ENCODE measurements at regions of chr14 and their contacts with region 1.

Region 1: DNA sequence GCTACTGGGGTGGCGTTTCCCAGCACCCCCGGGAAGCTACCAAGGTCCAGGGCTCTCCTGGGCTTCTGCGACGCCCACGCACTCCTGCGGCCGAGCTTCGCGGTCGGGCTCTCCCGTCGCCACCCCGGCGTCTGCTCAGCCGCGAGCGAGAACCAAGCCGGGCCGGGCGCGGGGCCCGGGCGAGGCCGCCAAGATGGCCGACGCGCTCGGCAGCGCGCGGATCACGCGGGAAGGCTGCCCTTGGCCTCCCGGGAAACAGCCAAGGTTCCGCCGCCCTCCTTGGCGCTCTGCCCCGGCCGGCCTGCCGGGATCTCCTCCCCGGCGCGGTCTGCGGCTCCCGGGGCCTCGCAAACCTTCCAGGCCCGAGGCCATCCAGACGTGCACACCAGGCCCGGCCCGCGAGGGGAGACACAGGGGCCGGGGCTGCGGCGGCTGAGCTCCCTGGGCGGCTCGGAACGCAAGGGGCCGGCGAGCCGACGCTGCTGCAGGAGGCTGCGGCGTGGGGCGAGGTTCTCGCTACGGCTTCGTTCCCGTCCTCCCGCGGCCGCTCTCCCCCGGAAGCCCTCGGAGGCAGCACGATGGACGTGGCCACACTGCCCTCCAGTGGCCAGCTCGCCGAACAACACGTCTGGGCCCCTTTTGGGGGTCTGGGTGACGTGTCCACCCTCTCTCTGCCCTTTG is 23.5 kb upstream of the ZFP36L1 start:
- DNase-seq: peak; percentile 51
- H3K4me3 ChIP-seq: peak overlapping the region; percentile 40 to 77 (median 53)
- H3K27ac ChIP-seq: peak overlapping the region; percentile 93 to 99 (median 97)
- H3K4me1 ChIP-seq: peaks cover 48 to 93% (median 55%) of the 10 kb centered on the region in 3 donors
- H3K27me3 ChIP-seq: no peaks in the 10 kb centered on the region
- CTCF ChIP-seq: peak; percentile 94 to 99 (median 97)
- POLR2A ChIP-seq: peak in 2 of 4 donors; percentile 32 to 78

Region 2: GRCh38 chr14:68248481-68249255 is 567.7 kb before region 1 on chr14:
- intact Hi-C with region 1: loop called (anchors 10 kb)
- DNase-seq: no peak
- H3K4me3 ChIP-seq: no peak overlapping the region
- H3K27ac ChIP-seq: peak overlapping the region; percentile 71 to 92 (median 87)
- H3K4me1 ChIP-seq: peaks cover 53 to 85% (median 74%) of the 10 kb centered on the region in 3 donors
- H3K27me3 ChIP-seq: no peaks in the 10 kb centered on the region
- CTCF ChIP-seq: peak; percentile 28 to 73 (median 66)
- POLR2A ChIP-seq: no peak

Measured in esophagus squamous epithelium (tissue), 5 donors.